ENCODE measurements at regions of chr10 and their contacts with region 1.

Region 1: GRCh38 chr10:59830601-59831259 is 75.6 kb downstream of the CCDC6 start:
- DNase-seq: peak; percentile 55 to 60
- ATAC-seq: peak; percentile 85 to 96
- H3K4me3 ChIP-seq: no peak overlapping the region
- H3K27ac ChIP-seq: no peak overlapping the region
- H3K4me1 ChIP-seq: no peaks in the 10 kb centered on the region
- CTCF ChIP-seq: peak; percentile 75
- EP300 ChIP-seq: no peak
- POLR2A ChIP-seq: no peak
- RAD21 ChIP-seq: peak; percentile 56 to 62

Region 2: DNA sequence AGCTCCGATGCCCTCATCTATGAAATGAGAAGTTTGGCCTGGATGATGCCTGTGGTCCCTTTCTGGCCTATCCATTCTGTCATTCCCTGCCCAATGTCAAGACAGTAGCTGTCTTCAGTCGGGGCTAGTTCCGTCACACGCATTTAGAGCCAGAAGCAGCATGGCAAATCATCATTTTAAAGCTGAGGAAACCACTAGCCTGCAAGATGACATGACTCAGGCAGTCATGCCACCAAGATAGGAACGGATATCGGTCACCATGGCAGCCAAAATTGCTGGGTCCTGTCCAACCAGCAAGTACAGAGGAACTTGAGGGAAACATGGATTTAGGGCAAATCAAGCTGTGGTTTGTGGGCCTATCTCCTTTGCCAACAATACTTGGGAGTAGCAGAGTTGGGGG is 13.0 kb before region 1 on chr10:
- CTCF ChIA-PET with region 1: interaction called, 18 read pairs
- POLR2A ChIA-PET with region 1: no interaction called
- DNase-seq: no peak
- ATAC-seq: no peak
- H3K4me3 ChIP-seq: no peak overlapping the region
- H3K27ac ChIP-seq: no peak overlapping the region
- H3K4me1 ChIP-seq: no peaks in the 10 kb centered on the region
- CTCF ChIP-seq: no peak
- EP300 ChIP-seq: no peak
- POLR2A ChIP-seq: no peak
- RAD21 ChIP-seq: no peak

Region 3: GRCh38 chr10:59865101-59865500 is 34.4 kb after region 1 on chr10:
- CTCF ChIA-PET with region 1: no interaction called
- POLR2A ChIA-PET with region 1: no interaction called
- DNase-seq: peak; percentile 10 to 23
- ATAC-seq: peak; percentile 50 to 55; a peak in 3 of 6 replicates
- H3K4me3 ChIP-seq: no peak overlapping the region
- H3K27ac ChIP-seq: no peak overlapping the region
- H3K4me1 ChIP-seq: no peaks in the 10 kb centered on the region
- CTCF ChIP-seq: peak; percentile 28; the same call in 2 of the 3 replicates
- EP300 ChIP-seq: no peak
- POLR2A ChIP-seq: no peak
- RAD21 ChIP-seq: peak; percentile 18 to 24; a peak in 1 of 5 replicates